ENCODE measurements at regions of chr14 and their contacts with region 1.

Region 1: GRCh38 chr14:68979021-68979782 is at the start of gene ACTN1:
- DNase-seq: peak; percentile 89
- ATAC-seq: peak; percentile 88
- H3K4me3 ChIP-seq: peak within 1 kb of the TSS; percentile 92 to 93
- H3K27ac ChIP-seq: peak within 1 kb of the TSS; percentile 90
- H3K4me1 ChIP-seq: peaks cover 16 to 25% of the 10 kb centered on the region in 2 experiments
- H3K27me3 ChIP-seq: no peaks in the 10 kb centered on the region
- CTCF ChIP-seq: no peak
- POLR2A ChIP-seq: peak; percentile 53
- RAD21 ChIP-seq: no peak
- total RNA-seq, gene ACTN1: 123 TPM

Region 2: DNA sequence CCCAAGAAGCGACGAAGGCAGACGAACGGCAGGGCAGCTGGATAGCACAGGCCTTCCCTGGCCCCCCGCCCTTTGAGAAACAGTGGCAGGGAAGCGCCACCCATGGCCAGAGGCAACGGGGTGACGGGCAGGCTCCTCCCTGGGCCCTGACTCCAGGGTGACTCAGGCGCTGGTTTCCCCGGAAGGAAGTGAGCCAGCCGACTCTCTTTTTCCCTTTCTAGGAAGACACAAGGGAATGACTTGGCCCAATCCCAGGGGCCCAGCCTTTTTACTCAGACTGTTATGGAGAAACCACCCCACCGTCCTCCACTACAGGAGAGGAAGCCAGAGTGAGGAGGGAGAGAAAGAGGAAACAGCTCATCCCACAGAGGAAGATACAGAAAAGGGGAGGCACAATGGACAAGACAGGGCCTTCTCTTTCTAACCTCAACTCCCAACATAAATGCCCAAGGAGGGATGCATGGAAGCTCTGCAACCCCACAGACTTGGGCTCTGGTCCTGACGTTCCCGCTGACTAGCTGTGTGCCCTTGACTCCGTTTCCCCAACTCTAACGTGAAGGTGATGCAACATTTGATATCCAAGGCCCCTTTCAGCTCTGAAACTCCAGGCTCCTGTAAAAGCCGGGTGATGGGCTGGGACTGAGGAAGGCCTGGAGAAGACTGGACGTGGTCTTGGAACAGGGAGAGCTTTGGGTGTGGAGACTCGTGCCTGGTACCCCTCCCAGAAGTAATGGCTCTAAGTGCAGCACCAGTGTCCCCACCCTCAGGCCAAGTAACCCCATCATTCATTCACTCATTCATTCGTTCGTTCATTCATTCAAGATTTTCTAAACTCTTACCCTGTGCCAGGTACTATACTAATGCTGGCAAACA is 27.9 kb before region 1 on chr14:
- CTCF ChIA-PET with region 1: no interaction called
- POLR2A ChIA-PET with region 1: interaction called, 4 read pairs
- RAD21 ChIA-PET with region 1: no interaction called
- intact Hi-C with region 1: loop called (anchors 2 kb)
- DNase-seq: peak; percentile 85
- ATAC-seq: peak; percentile 98
- H3K4me3 ChIP-seq: peak overlapping the region; percentile 20 to 42; a peak in 3 of 4 replicates
- H3K27ac ChIP-seq: peak overlapping the region; percentile 81
- H3K4me1 ChIP-seq: peaks cover 54 to 84% of the 10 kb centered on the region in 2 experiments
- H3K27me3 ChIP-seq: no peaks in the 10 kb centered on the region
- CTCF ChIP-seq: no peak
- POLR2A ChIP-seq: no peak
- RAD21 ChIP-seq: no peak

Measured in HCT116 (cell line).